ENCODE measurements at regions of chr19 and their contacts with region 1.

Region 1: DNA sequence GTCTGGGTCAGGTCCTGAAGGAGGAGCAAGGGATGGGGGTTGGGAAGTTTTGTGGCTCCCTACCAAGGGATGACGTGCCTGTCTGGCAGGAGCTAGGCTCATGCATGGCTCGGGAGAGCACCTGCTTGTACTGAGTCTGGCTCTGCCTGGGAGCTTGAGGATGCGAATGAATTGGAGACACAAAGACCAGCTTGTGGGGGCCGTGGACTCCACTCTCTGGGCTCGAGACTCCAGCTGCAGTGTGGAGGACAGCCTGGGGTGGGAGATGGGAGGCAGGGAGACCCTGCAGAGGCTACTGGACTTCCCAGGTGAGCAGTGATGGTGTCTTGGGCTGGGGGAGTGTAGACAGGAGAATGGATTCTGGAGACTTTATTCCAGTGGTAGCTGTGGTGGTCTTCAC is 15.2 kb upstream of the URI1 start:
- DNase-seq: no peak
- H3K4me3 Mint-ChIP-seq: no peak overlapping the region
- H3K27ac Mint-ChIP-seq: no peak overlapping the region
- H3K4me1 Mint-ChIP-seq: no peaks in the 10 kb centered on the region
- H3K27me3 Mint-ChIP-seq: peaks cover 49% of the 10 kb centered on the region
- CTCF ChIP-seq: no peak

Region 2: GRCh38 chr19:29887442-29887855 is 39.4 kb before region 1 on chr19:
- CTCF ChIA-PET with region 1: no interaction called
- intact Hi-C with region 1: no loop called
- DNase-seq: no peak
- H3K4me3 Mint-ChIP-seq: no peak overlapping the region
- H3K27ac Mint-ChIP-seq: no peak overlapping the region
- H3K4me1 Mint-ChIP-seq: no peaks in the 10 kb centered on the region
- H3K27me3 Mint-ChIP-seq: peaks cover 29% of the 10 kb centered on the region
- CTCF ChIP-seq: no peak

Region 3: DNA sequence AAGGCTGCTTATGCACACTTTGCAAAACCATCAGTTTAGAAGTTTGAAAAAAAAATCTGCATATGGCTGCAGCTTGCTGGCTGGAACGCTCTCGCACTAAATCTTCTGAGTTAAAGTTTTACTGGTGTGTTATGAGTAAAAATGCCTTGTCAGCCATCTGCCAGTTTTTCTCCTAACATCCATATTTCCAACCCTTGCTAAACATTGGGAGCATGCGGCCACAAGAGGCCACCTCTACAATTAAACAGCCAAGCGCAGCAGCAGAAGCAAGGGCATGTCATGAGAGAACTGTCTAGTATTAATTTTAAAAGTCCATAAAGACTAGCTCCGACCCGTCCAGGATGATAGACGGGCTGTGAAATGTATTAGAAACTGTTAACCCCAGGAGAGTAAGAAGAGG is 1174.2 kb after region 1 on chr19:
- CTCF ChIA-PET with region 1: interaction called, 10 read pairs
- intact Hi-C with region 1: no loop called
- DNase-seq: no peak
- H3K4me3 Mint-ChIP-seq: no peak overlapping the region
- H3K27ac Mint-ChIP-seq: no peak overlapping the region
- H3K4me1 Mint-ChIP-seq: no peaks in the 10 kb centered on the region
- H3K27me3 Mint-ChIP-seq: no peaks in the 10 kb centered on the region
- CTCF ChIP-seq: no peak